ENCODE measurements at regions of chr6 and their contacts with region 1.

Region 1: GRCh38 chr6:110682460-110682853 is 132.8 kb downstream of the CDK19 start:
- DNase-seq: no peak
- H3K4me3 ChIP-seq: no peak overlapping the region
- H3K27ac ChIP-seq: no peak overlapping the region
- H3K4me1 ChIP-seq: peaks cover 9% of the 10 kb centered on the region
- H3K27me3 ChIP-seq: no peaks in the 10 kb centered on the region
- CTCF ChIP-seq: peak; percentile 27 to 78 (median 72)
- POLR2A ChIP-seq: no peak

Region 2: DNA sequence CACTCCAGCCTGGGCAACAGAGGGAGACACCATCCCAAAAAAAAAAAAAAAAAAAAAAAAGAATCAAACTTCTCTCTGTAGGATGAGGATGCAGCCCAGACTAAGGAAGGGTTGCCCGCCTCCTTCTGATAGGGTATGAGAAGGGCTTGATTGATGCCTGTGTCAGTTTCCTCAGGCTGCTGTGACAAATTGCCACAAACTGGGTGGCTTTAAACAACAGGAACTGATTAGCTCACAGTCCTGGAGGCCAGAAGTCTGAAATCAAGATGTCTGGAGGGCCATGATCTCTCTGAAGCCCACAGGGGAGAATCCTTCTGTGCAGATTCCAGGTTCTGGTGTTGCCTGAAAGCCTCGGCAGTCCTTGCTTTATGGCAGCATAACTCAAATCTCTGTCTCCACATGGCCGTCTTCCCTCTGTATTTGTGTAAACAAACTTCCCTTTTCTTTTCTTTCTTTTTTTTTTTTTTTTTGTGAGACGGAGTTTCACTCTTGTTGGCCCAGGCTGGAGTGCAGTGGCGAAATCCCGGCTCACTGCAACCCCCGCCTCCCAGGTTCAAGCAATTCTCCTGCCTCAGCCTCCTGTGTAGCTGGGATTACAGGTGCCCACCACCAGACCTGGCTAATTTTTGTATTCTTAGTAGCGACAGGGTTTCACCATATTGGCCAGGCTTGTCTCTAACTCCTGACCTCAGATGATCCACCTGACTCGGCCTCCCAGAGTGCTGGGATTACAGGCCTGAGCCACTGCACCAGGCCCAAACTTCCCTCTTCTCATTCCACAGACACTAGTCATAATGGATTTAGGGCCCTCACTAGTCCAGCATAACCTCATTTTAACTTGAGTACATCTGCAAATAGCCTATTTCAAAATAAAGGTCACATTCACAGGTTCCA is 144.0 kb after region 1 on chr6:
- intact Hi-C with region 1: no loop called
- DNase-seq: no peak
- H3K4me3 ChIP-seq: no peak overlapping the region
- H3K27ac ChIP-seq: no peak overlapping the region
- H3K4me1 ChIP-seq: peaks cover 10% of the 10 kb centered on the region
- H3K27me3 ChIP-seq: no peaks in the 10 kb centered on the region
- CTCF ChIP-seq: no peak
- POLR2A ChIP-seq: no peak

Region 3: DNA sequence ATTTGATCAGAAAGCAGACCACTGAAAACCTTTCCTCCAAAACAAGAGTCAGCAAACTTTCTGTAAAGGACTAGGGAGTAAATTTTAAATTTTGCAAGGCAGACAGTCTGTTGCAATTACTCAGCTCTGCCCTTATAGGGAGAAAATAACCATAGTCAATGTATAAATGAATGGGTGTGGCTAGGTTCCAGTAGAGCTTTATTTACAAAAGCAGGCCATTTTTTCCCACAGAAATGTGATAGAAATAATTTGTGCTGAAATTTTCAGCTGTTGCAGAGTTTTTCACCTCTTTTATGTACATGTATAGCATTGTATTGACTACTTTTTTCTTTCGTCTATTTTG is 199.8 kb after region 1 on chr6:
- intact Hi-C with region 1: loop called (anchors 5 kb)
- DNase-seq: no peak
- H3K4me3 ChIP-seq: no peak overlapping the region
- H3K27ac ChIP-seq: no peak overlapping the region
- H3K4me1 ChIP-seq: peaks cover 86% of the 10 kb centered on the region
- H3K27me3 ChIP-seq: no peaks in the 10 kb centered on the region
- CTCF ChIP-seq: no peak
- POLR2A ChIP-seq: no peak

Region 4: DNA sequence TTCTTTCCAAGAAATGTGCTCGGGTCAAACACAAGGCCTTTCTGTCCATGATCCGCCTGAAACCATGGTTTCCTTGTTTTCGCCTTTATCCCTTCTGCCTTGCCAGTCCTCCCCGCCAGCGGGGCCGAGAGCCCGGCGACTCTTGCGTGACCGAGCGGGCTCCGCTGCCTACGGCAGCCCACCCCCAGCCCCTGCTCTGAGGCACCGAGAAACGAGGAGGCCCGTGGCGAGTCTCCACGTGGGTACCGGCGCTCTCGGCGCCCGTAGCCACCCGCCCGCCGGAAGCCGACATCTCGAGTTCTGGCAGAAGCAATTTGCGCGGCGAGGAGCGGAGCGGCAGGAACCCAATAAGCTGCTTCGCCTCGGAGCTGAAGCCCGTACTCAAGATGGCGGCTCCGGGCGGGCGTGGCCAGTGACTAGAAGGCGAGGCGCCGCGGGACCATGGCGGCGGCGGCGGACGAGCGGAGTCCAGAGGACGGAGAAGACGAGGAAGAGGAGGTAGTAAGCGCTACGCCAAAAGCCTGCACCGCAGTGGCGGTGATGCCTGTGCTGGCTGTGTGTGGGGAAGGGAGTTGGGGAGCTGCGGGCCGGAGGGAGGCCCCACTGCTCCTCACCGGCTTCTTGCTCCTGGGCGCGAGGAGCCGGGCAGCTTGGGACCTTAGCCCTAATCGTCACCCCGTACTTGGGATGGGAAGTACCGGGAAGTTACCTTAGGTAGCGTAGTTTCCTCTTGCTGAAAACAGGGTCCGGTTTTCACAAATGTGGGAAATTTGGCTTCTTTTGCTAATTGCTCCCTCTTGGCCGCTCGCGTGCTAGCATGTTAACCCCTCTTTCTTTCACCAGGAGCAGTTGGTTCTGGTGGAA is 276.1 kb after region 1 on chr6 and contains the start of gene GTF3C6:
- intact Hi-C with region 1: loop called (anchors 10 kb)
- DNase-seq: peak in 1 of 2 donors; percentile 89
- H3K4me3 ChIP-seq: peak within 1 kb of the TSS; percentile 74 to 84
- H3K27ac ChIP-seq: peak within 1 kb of the TSS; percentile 86
- H3K4me1 ChIP-seq: peaks cover 20% of the 10 kb centered on the region
- H3K27me3 ChIP-seq: no peaks in the 10 kb centered on the region
- CTCF ChIP-seq: no peak
- POLR2A ChIP-seq: peak in 1 of 2 donors; percentile 52
- total RNA-seq, gene GTF3C6: 25.5 TPM

Measured in vagina (tissue), 2 donors.